Thyroid gland (tissue), 4 donors: ENCODE measurements at regions of chr10 and their contacts with region 1.

Region 1: GRCh38 chr10:69506834-69507721 is 55.8 kb downstream of the TSPAN15 start:
- DNase-seq: no peak
- H3K4me3 ChIP-seq: no peak overlapping the region
- H3K27ac ChIP-seq: peak overlapping the region in 1 of 3 donors; percentile 36
- H3K4me1 ChIP-seq: no peaks in the 10 kb centered on the region
- H3K27me3 ChIP-seq: no peaks in the 10 kb centered on the region
- CTCF ChIP-seq: no peak
- POLR2A ChIP-seq: no peak

Region 2: GRCh38 chr10:69303632-69304051 is 203.4 kb before region 1 on chr10:
- intact Hi-C with region 1: no loop called
- DNase-seq: no peak
- H3K4me3 ChIP-seq: no peak overlapping the region
- H3K27ac ChIP-seq: no peak overlapping the region
- H3K4me1 ChIP-seq: no peaks in the 10 kb centered on the region
- H3K27me3 ChIP-seq: no peaks in the 10 kb centered on the region
- CTCF ChIP-seq: no peak
- POLR2A ChIP-seq: no peak

Region 3: GRCh38 chr10:69425511-69426298 is 81.4 kb before region 1 on chr10:
- intact Hi-C with region 1: loop called (anchors 2 kb)
- DNase-seq: no peak
- H3K4me3 ChIP-seq: no peak overlapping the region
- H3K27ac ChIP-seq: no peak overlapping the region
- H3K4me1 ChIP-seq: no peaks in the 10 kb centered on the region
- H3K27me3 ChIP-seq: no peaks in the 10 kb centered on the region
- CTCF ChIP-seq: no peak
- POLR2A ChIP-seq: no peak

Region 4: GRCh38 chr10:70363971-70364771 is 857.1 kb after region 1 on chr10:
- intact Hi-C with region 1: no loop called
- DNase-seq: peak; percentile 95 to 96
- H3K4me3 ChIP-seq: no peak overlapping the region
- H3K27ac ChIP-seq: peak overlapping the region; percentile 80 to 93 (median 88)
- H3K4me1 ChIP-seq: peaks cover 10 to 17% of the 10 kb centered on the region in 2 donors
- H3K27me3 ChIP-seq: no peaks in the 10 kb centered on the region
- CTCF ChIP-seq: peak; percentile 86 to 99 (median 93)
- POLR2A ChIP-seq: peak in 1 of 2 donors; percentile 43